K562 (cell line): ENCODE measurements at regions of chr18 and their contacts with region 1.

Region 1: DNA sequence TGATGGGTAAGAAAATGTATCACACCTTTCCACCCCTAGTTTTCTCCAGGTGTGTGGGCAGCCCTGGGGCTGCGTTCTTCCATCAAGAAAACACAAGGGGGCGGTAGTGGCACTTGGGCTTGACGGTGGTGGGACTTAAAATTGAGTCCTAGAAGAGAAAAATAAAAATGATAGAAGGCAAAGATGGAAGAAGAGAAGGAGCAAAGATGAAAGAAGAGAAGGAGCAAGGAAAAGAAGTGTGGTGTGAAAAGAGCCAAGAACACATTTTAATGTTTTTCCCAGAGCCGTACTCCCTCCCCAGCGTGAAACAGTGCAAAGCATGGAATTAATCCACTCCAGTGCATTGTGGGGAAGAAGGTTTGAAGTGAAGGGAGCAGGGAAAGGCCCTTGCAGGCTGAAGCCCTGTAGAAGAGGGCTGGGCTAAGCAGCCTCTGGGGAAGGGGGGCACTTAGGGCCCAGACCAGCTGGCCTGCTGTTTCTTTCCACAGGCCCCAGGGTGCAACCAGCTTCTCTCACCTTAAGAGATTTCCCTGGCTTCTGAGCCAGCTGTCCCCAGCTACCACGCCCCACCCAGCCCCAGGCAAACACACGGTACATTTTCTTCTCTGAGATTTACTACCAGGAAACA is 256.8 kb downstream of the RNF152 start:
- DNase-seq: peak; percentile 9 to 35 (median 26)
- ATAC-seq: peak; percentile 77
- H3K4me3 ChIP-seq: no peak overlapping the region
- H3K27ac ChIP-seq: no peak overlapping the region
- H3K4me1 ChIP-seq: no peaks in the 10 kb centered on the region
- H3K27me3 ChIP-seq: no peaks in the 10 kb centered on the region
- CTCF ChIP-seq: peak; percentile 55 to 63 (median 55)
- EP300 ChIP-seq: no peak
- POLR2A ChIP-seq: no peak
- RAD21 ChIP-seq: peak; percentile 22 to 52; a peak in 3 of 4 replicates

Region 2: DNA sequence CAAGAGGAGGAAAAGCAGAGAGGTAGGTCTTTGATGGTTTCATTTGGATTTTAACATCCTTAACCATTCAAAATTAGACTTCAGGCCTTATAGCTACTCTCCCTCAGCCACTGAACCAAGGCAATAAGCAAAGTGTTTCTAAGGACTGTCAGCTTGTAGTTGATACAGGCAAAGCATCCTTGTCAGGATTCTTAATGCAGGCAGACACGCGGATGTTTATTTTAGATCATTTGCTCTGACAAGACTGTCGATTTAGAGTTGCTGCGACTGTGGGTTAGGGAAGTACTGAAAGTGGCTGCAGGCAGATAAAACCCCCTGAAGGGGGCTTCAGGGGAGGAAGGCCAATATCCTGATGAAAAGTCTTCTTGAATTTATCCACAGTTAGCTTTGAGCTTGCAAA is 256.2 kb before region 1 on chr18:
- CTCF ChIA-PET with region 1: no interaction called
- POLR2A ChIA-PET with region 1: no interaction called
- in situ Hi-C with region 1: no loop called
- intact Hi-C with region 1: no loop called
- DNase-seq: no peak
- ATAC-seq: no peak
- H3K4me3 ChIP-seq: no peak overlapping the region
- H3K27ac ChIP-seq: no peak overlapping the region
- H3K4me1 ChIP-seq: no peaks in the 10 kb centered on the region
- H3K27me3 ChIP-seq: no peaks in the 10 kb centered on the region
- CTCF ChIP-seq: no peak
- EP300 ChIP-seq: no peak
- POLR2A ChIP-seq: no peak
- RAD21 ChIP-seq: no peak

Region 3: DNA sequence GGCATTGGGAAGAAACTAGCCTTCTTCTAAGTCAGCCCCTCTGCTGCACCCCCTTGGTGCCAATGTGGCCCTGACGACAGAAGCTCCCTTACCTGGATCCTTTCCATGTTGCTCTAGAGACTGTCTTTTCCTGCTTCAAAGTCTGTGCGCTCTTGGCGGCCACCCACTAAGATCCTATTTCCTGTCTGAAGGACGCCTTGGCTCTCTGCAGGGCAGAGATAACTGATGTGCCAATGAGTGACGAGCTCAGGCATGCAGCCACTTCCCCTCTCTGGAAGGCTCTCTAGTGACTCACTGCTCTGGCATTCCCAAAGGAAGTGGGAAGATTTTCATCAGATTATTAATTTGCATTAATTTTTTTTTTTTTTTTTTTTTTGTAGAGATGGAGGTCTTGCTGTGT is 29.3 kb before region 1 on chr18:
- CTCF ChIA-PET with region 1: no interaction called
- POLR2A ChIA-PET with region 1: no interaction called
- in situ Hi-C with region 1: no loop called
- intact Hi-C with region 1: no loop called
- DNase-seq: peak in 2 of 4 experiments; percentile 19 to 24
- ATAC-seq: peak; percentile 51; the same call in 1 of the 3 replicates
- H3K4me3 ChIP-seq: peak overlapping the region; percentile 38
- H3K27ac ChIP-seq: no peak overlapping the region; the same call in 2 of the 3 replicates
- H3K4me1 ChIP-seq: no peaks in the 10 kb centered on the region; a peak in 1 of 5 replicates
- H3K27me3 ChIP-seq: no peaks in the 10 kb centered on the region
- CTCF ChIP-seq: no peak
- EP300 ChIP-seq: peak; percentile 32; the same call in 1 of the 2 replicates
- POLR2A ChIP-seq: no peak
- RAD21 ChIP-seq: no peak

Region 4: GRCh38 chr18:61619783-61620182 is 16.2 kb before region 1 on chr18:
- CTCF ChIA-PET with region 1: no interaction called
- POLR2A ChIA-PET with region 1: no interaction called
- in situ Hi-C with region 1: no loop called
- intact Hi-C with region 1: no loop called
- DNase-seq: no peak
- ATAC-seq: no peak
- H3K4me3 ChIP-seq: no peak overlapping the region
- H3K27ac ChIP-seq: no peak overlapping the region
- H3K4me1 ChIP-seq: no peaks in the 10 kb centered on the region
- H3K27me3 ChIP-seq: no peaks in the 10 kb centered on the region
- CTCF ChIP-seq: no peak
- EP300 ChIP-seq: no peak
- POLR2A ChIP-seq: no peak
- RAD21 ChIP-seq: no peak

Region 5: DNA sequence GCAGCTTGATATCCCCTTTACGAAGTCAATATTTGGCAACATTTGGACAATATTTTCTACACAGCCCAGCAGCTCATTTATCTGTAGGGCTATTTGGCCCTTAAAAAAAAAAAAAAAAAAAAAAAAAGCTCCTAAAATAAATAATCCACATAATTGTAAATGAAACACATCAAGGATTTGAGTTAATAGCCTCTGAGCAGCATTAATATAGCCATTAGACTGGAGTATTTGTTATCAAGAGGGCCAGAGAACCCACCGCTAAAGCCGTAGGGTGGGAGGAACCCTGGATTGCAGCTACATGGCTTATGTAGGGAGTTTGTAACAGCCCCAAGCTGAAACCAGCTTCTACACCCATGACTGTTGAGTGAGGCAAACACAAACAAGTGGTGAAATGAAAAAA is 172.3 kb after region 1 on chr18:
- CTCF ChIA-PET with region 1: no interaction called
- POLR2A ChIA-PET with region 1: no interaction called
- in situ Hi-C with region 1: no loop called
- intact Hi-C with region 1: no loop called
- DNase-seq: no peak
- ATAC-seq: no peak
- H3K4me3 ChIP-seq: no peak overlapping the region
- H3K27ac ChIP-seq: no peak overlapping the region
- H3K4me1 ChIP-seq: no peaks in the 10 kb centered on the region
- H3K27me3 ChIP-seq: no peaks in the 10 kb centered on the region
- CTCF ChIP-seq: no peak
- EP300 ChIP-seq: no peak
- POLR2A ChIP-seq: no peak
- RAD21 ChIP-seq: no peak

Region 6: GRCh38 chr18:61901323-61901986 is 265.4 kb after region 1 on chr18:
- CTCF ChIA-PET with region 1: no interaction called
- POLR2A ChIA-PET with region 1: no interaction called
- in situ Hi-C with region 1: no loop called
- intact Hi-C with region 1: loop called (anchors 2 kb)
- DNase-seq: peak; percentile 43 to 58 (median 56)
- ATAC-seq: peak; percentile 96
- H3K4me3 ChIP-seq: no peak overlapping the region
- H3K27ac ChIP-seq: no peak overlapping the region
- H3K4me1 ChIP-seq: no peaks in the 10 kb centered on the region; a peak in 2 of 5 replicates
- H3K27me3 ChIP-seq: no peaks in the 10 kb centered on the region; a peak in 1 of 5 replicates
- CTCF ChIP-seq: peak; percentile 66 to 77 (median 68)
- EP300 ChIP-seq: no peak
- POLR2A ChIP-seq: no peak
- RAD21 ChIP-seq: peak; percentile 26 to 48; a peak in 2 of 4 replicates